Right ventricle myocardium superior (tissue), 1 donor: ENCODE measurements at regions of chr7 and their contacts with region 1.

Region 1: GRCh38 chr7:74401137-74401859 is 52.4 kb upstream of the GTF2IRD1 start:
- DNase-seq: peak; percentile 73
- ATAC-seq: peak; percentile 68

Region 2: GRCh38 chr7:74068393-74069085 is 332.8 kb before region 1 on chr7:
- intact Hi-C with region 1: loop called (anchors 2 kb)
- DNase-seq: no peak
- ATAC-seq: peak; percentile 5

Region 3: DNA sequence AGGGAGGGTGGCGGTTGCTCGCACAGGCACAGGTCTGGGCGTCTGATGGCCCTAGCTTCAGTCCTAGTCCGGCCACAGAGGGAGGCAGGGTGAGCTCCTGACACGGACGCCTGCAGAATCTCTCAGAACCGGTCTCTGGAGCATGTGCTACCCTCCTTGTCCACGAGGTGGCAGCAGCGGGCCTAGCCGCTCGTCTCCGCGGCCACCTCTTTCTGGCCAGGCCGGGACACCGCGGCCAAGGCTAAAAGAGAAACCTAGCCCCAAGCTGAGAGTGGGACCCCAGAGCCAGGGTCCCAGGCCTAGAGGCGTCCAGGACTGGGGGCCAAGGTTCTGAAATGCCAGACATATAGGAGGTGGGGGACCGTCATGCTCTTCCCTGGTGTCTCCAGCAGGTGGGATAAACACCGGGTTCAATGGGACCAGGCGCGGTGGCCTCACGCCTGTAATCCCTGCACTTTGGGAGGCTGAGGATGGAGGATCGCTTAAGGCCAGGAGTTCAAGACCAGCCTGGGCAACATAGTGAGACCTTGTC is 194.6 kb before region 1 on chr7:
- intact Hi-C with region 1: loop called (anchors 2 kb)
- DNase-seq: peak; percentile 93
- ATAC-seq: peak; percentile 87

Region 4: DNA sequence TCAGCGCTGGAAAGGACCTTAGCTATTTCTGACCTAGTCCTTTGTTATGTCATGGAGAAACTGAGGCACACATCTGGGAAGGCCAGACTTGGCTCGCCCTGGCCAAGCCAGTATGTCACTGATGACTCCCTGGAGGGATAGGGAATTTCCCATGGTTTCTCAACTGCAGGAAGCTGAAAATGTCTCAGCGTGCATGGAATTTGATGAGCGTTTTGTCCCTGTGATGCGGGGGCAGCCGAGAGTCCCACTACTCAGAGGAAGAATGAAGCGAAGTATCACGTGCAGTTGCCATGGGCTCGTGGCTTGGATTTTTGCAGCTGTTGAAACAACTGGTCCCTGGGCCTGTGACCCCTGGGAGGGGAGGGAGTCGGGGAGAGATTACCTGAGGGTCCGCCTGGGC is 67.3 kb before region 1 on chr7:
- intact Hi-C with region 1: no loop called
- DNase-seq: no peak
- ATAC-seq: no peak

Region 5: DNA sequence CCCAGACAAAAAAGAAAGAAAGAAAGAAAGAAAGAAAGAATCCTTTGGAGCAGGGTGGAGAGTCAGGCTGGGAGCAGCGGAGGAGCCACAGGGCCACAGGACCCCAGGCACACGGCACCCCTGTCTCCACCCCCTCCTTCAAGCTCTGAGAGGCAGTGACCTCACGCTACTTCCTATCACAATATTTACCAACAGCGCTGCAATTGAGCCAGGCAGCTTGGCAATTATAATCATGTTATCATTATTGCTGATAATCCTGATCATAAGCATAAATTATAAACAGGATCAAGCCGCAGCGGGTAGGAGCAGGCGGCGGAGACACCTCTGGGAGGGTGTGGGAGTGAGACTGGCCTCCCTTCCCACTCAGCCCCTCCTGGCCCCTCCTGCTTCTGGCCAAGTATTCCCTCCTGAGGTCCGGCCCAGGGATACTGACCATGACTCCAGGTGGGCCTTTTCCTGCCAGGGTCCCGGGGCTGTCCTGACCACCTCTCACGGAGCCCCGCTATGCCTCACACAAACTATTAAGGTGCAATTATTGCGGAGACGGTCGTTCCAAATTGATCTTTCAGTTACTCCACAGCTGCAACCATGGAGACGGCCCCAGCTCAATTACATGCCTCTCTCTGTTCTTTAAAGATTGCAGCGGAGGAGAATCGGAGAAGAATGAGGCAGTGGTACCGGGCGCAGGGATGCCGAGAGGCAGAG is 42.4 kb after region 1 on chr7:
- intact Hi-C with region 1: no loop called
- DNase-seq: no peak
- ATAC-seq: no peak